ENCODE measurements at regions of chr17 and their contacts with region 1.

Region 1: GRCh38 chr17:3558603-3559269 is 1.1 kb upstream of the TRPV3 start:
- DNase-seq: peak; percentile 98
- H3K4me3 ChIP-seq: no peak overlapping the region
- H3K27ac ChIP-seq: peak overlapping the region; percentile 93
- H3K4me1 ChIP-seq: peaks cover 34% of the 10 kb centered on the region
- H3K27me3 ChIP-seq: no peaks in the 10 kb centered on the region
- CTCF ChIP-seq: no peak

Region 2: GRCh38 chr17:2940352-2940751 is 618.4 kb before region 1 on chr17:
- CTCF ChIA-PET with region 1: no interaction called
- dilution Hi-C with region 1: no loop called
- in situ Hi-C with region 1: no loop called
- intact Hi-C with region 1: no loop called
- DNase-seq: no peak
- H3K4me3 ChIP-seq: no peak overlapping the region
- H3K27ac ChIP-seq: no peak overlapping the region
- H3K4me1 ChIP-seq: peaks cover 4% of the 10 kb centered on the region
- H3K27me3 ChIP-seq: no peaks in the 10 kb centered on the region
- CTCF ChIP-seq: no peak

Region 3: GRCh38 chr17:3575511-3575910 is 16.8 kb after region 1 on chr17:
- CTCF ChIA-PET with region 1: no interaction called
- dilution Hi-C with region 1: no loop called
- in situ Hi-C with region 1: no loop called
- intact Hi-C with region 1: loop called (anchors 1 kb)
- DNase-seq: peak; percentile 96
- H3K4me3 ChIP-seq: no peak overlapping the region
- H3K27ac ChIP-seq: peak overlapping the region; percentile 68
- H3K4me1 ChIP-seq: peaks cover 14% of the 10 kb centered on the region
- H3K27me3 ChIP-seq: no peaks in the 10 kb centered on the region
- CTCF ChIP-seq: no peak

Region 4: DNA sequence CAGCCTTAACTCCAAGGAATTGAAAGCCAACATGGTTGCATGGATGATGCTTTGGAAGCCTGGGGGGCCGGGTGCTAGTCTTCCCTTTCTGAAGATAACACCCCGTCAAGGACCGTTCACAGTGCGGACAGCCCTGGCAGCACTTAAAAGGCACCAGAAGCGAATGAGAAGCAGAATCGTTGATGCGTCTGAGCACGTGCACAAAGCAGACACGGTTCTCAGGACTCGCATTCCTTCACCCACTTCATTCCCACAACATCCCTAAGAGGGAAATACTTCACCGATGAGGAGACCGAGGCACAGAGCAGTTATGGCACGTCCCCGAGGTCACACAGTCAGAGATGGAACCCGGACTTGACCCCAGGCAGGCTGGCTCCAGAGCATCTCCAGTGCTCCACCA is 36.2 kb after region 1 on chr17:
- CTCF ChIA-PET with region 1: interaction called, 3 read pairs
- dilution Hi-C with region 1: loop called (anchors 5 kb)
- in situ Hi-C with region 1: no loop called
- intact Hi-C with region 1: no loop called
- DNase-seq: no peak
- H3K4me3 ChIP-seq: no peak overlapping the region
- H3K27ac ChIP-seq: no peak overlapping the region
- H3K4me1 ChIP-seq: no peaks in the 10 kb centered on the region
- H3K27me3 ChIP-seq: no peaks in the 10 kb centered on the region
- CTCF ChIP-seq: no peak

Region 5: DNA sequence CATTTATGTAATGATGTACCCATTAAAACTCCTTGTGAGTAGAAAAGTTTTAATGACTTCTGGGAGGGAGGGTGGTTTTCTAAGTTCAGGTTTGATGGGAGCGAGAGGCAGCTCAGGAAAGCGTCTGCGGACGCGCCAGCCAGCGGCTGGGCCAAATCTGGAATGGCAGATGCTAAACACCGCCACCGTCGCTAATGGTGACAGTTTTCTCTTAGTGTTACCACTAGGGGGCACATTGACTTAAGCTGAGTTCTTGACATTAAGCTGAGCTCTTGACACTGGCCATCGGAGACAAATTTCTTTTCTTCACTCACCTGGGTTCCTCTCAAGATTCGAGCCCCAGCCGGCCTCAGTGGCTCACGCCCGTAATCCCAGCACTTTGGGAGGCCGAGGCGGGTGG is 43.8 kb after region 1 on chr17:
- CTCF ChIA-PET with region 1: no interaction called
- dilution Hi-C with region 1: loop called (anchors 5 kb)
- in situ Hi-C with region 1: no loop called
- intact Hi-C with region 1: loop called (anchors 2 kb)
- DNase-seq: no peak
- H3K4me3 ChIP-seq: no peak overlapping the region
- H3K27ac ChIP-seq: no peak overlapping the region
- H3K4me1 ChIP-seq: peaks cover 17% of the 10 kb centered on the region
- H3K27me3 ChIP-seq: no peaks in the 10 kb centered on the region
- CTCF ChIP-seq: peak; percentile 27 to 48

Region 6: DNA sequence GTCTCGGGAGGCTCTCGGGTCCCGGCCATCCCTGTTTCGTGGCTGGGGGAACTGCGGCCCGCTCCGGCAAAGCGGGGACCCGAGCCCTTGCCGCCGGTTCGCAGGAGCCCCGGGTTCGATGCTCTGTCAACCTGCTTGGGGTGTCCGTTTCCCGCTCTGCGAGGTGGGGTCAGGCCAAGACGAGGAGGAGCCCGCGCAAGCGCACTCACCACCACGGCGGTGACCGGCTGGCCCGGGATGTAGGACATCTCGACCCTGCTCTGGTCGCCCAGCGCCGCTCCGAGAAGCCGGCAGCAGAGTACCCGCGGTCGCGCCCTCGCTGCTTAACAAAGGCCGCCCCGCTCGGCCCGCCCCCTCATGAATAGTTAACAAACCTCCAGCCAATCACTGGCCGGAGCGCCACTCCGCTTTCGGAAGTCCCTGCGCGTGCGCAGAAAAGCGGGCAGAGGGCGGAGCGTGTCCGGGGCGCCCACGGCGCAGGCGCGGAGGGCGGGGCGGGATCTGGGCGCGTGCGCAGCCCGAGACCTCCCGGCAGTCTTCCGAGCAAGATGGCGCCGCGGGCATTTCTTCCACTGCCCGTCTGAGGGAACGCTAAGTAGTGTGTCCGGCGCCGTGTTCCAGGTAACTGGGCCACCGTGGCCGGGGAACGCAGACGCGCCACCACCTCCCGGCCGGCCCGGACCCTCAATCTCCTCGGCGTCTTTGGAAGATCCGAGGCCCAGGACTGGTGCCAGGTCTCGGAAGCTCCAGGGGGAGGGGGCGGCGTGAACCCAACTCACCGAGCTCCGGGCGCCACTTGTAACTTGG is 109.7 kb after region 1 on chr17 and contains the starts of genes EMC6 and TAX1BP3:
- CTCF ChIA-PET with region 1: no interaction called
- dilution Hi-C with region 1: no loop called
- in situ Hi-C with region 1: no loop called
- intact Hi-C with region 1: loop called (anchors 5 kb)
- DNase-seq: peak; percentile 97
- H3K4me3 ChIP-seq: peak within 1 kb of the TSS; percentile 91 to 96 (median 94)
- H3K27ac ChIP-seq: peak within 1 kb of the TSS; percentile 78
- H3K4me1 ChIP-seq: peaks cover 23% of the 10 kb centered on the region
- H3K27me3 ChIP-seq: no peaks in the 10 kb centered on the region
- CTCF ChIP-seq: no peak
- total RNA-seq, gene EMC6: 11.0 to 57.9 TPM
- total RNA-seq, gene TAX1BP3: 188 to 213 TPM

Measured in mammary epithelial cell (primary cell).